ENCODE measurements at regions of chr15 and their contacts with region 1.

Region 1: DNA sequence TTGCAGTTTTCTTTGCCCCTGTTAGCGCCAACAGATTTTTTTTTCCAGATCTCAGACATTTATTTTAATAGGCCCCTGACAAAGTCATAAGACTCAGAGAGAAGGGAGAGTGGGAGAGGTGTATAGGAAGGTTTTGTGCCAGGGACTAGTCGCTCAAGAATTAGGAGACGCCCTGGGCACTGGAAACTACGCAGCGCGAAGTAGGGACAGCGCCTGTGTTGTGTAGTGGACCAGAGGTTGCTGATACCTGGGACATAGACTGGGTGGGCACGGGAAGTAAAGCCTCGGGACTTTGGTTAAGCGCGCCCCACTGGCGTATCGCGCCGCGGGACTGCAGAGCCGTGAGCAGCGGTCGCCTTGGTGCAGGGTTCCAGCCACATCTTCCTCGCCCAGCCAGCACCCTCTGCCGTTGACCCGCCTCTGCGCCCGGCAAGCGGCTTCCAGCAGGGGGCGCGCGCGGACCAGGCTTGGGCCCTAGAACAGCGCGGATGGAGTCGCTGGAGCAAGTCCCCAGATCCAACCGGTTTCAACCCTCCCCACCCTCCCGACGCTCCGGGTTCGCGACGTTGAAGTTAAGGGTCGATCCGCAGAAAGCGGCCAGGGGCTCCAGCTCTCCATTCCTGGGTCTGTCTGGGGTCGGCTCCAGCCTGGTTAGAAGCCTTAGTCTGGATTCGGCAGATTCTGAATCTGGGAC is 3.0 kb upstream of the ISLR2 start:
- DNase-seq: peak; percentile 70 to 73
- ATAC-seq: peak; percentile 86 to 90
- H3K4me3 ChIP-seq: peak overlapping the region; percentile 43 to 57 (median 50)
- H3K27ac ChIP-seq: peak overlapping the region in 3 of 4 donors; percentile 27 to 59 (median 38)
- H3K4me1 ChIP-seq: peaks cover 0 to 19% of the 10 kb centered on the region in 2 donors
- H3K27me3 ChIP-seq: peaks cover 51 to 66% (median 53%) of the 10 kb centered on the region in 3 donors
- CTCF ChIP-seq: peak; percentile 91 to 99 (median 98)
- POLR2A ChIP-seq: no peak

Region 2: DNA sequence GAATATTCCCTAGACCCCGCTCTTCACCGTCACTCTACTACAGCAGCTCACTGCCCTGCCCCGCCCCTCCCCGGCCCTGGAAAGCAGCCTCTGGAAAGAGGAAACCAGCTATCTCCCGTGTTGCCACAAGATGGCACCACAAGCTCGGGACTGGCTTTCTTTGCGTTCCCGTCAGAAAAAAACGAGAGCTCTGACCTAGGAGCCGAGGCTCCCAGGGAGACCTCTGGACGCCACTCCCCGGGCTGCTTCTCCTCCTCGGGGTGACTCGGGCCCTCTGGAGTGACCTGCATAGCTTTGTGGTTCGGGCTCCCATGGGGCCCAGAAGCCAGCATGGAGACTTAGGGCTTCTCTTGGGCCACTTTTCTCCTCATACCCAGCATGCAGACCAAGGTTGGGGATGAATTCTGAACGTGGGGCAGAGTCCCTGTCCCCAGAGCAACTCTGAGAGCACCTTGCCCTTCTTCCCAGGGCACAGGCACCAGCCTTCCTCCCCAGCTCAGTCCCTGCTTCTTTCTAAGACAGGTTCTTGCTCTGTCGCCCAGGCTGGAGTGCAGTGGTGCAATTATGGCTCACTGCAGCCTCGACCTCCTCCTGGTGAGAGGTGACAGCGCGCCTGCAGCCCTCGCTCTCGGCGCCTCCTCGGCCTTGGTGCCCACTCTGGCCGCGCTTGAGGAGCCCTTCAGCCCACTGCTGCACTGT is 154.3 kb before region 1 on chr15:
- in situ Hi-C with region 1: no loop called
- intact Hi-C with region 1: loop called (anchors 10 kb)
- DNase-seq: peak; percentile 64 to 76
- ATAC-seq: peak; percentile 95 to 99
- H3K4me3 ChIP-seq: peak overlapping the region; percentile 19 to 35 (median 28)
- H3K27ac ChIP-seq: no peak overlapping the region
- H3K4me1 ChIP-seq: peaks cover 0 to 3% of the 10 kb centered on the region in 2 donors
- H3K27me3 ChIP-seq: peaks cover 0 to 3% (median 0%) of the 10 kb centered on the region in 3 donors
- CTCF ChIP-seq: peak; percentile 75 to 90 (median 87)
- POLR2A ChIP-seq: no peak

Region 3: DNA sequence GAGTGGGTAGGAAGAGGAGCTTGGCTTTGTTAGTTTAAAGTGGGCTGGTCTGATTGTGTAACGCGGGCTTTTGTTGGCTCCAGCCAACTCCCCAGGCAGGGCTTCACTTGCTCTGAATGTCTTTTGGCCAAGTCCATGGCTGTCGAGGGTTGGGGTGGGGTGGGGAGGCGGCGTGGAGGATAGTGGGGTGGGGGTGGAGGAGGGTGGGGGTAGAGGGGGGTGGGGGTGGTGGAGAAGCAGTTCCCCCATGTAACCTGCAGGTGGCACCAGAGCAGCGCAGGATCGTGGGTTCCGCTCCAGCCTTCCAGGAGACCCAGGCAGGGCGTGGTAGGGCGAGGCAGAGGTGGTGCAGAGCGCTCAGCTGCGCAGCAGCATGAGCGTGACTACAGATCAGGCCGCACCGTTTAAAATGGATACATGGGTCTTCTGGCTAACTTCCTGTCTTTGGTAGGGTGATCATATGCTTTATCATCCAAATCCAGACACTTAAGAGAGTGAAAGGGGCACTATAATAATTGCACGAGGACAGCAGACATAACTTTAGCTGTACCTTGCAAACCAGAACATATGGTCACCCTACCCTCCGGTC is 73.4 kb before region 1 on chr15:
- in situ Hi-C with region 1: loop called in 1 of 4 experiments (anchors 10 kb)
- intact Hi-C with region 1: no loop called
- DNase-seq: peak; percentile 50 to 75
- ATAC-seq: peak; percentile 73 to 77
- H3K4me3 ChIP-seq: no peak overlapping the region
- H3K27ac ChIP-seq: no peak overlapping the region
- H3K4me1 ChIP-seq: peaks cover 7 to 14% of the 10 kb centered on the region in 2 donors
- H3K27me3 ChIP-seq: no peaks in the 10 kb centered on the region
- CTCF ChIP-seq: peak in 3 of 5 experiments; percentile 34 to 73 (median 60)
- POLR2A ChIP-seq: no peak

Region 4: GRCh38 chr15:74307827-74308644 is 180.6 kb after region 1 on chr15:
- in situ Hi-C with region 1: loop called (anchors 5 to 10 kb)
- intact Hi-C with region 1: loop called (anchors 1 kb)
- DNase-seq: peak in 1 of 2 donors; percentile 35
- ATAC-seq: peak; percentile 64 to 83
- H3K4me3 ChIP-seq: no peak overlapping the region
- H3K27ac ChIP-seq: no peak overlapping the region
- H3K4me1 ChIP-seq: no peaks in the 10 kb centered on the region
- H3K27me3 ChIP-seq: peaks cover 6 to 10% (median 10%) of the 10 kb centered on the region in 3 donors
- CTCF ChIP-seq: peak; percentile 30 to 82 (median 66)
- POLR2A ChIP-seq: no peak